Mucosa of descending colon (tissue), 3 donors: ENCODE measurements at regions of chr3 and their contacts with region 1.

Region 1: DNA sequence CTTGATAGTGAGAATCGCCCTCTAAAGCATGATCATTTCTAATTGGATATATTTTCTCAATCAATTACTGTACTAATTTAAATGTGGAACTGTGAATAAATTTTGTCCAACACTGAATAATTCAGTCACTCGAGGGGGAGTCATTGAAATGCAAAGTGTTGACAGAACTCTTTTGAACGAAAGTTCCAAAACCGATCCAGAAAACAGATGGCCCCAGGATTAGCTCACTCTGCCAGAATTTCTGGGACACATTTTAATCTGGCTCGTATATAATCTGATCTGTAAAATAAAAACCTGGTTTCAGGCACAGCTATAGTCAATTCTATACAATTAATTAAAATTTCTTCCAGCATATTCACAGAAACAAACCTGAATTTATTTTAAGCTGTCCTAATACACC is 580.4 kb downstream of the ROBO1 start:
- DNase-seq: no peak
- ATAC-seq: no peak
- H3K4me3 ChIP-seq: no peak overlapping the region
- H3K4me1 ChIP-seq: no peaks in the 10 kb centered on the region
- CTCF ChIP-seq: no peak

Region 2: DNA sequence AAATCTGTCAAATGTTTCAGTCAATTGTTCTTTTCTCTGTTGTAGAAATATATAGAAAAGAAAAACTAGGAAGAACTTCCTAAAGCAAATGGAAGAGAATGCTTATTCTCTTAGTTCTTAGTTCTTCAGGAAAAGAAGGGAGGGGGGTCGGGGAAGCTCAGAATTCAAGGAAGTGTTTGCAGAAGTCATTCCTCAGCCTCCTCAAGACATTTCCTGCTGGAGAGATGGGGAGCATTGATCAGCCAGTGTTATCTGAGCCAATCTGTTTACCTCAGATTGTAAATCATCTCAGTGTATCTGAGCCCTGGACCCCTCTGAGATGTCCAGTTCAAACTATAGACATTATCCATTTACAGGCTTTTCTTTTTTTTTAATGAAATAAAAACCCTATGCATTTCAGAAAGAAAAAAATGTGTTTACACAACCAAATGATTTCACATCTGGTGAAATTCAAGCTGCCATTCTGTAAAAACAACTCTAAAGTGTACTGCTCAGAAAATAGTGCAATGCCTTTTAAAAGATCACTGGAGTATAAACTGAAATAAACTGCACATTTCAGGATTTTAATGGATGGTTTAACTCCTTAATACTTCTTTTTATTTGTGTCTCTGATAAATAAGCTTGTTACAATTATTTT is 119.6 kb after region 1 on chr3:
- intact Hi-C with region 1: loop called in 1 of 2 experiments (anchors 5 kb)
- DNase-seq: no peak
- ATAC-seq: no peak
- H3K4me3 ChIP-seq: no peak overlapping the region
- H3K4me1 ChIP-seq: no peaks in the 10 kb centered on the region
- CTCF ChIP-seq: no peak